WTC11 (cell line): ENCODE measurements at regions of chr3 and their contacts with region 1.

Region 1: DNA sequence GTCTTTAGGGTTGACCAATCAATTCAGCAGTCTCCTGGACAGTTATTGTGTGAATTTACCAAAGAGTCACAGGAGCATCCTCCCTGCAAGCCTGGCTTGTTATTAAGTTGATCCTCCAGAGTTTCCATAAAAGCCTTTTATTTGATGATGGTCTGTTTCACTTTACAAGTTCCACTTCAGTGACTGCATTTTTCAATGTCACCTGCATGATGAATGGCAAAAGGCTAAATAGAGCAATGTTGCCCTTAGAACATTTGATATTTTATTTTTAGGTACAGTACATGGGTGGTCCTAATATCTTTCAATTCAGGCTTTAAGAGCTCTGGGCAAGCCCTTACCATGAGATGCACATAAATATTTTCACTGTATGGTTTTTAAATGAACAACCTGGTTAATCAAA is 22.6 kb downstream of the GUCA1C start:
- DNase-seq: no peak
- ATAC-seq: no peak
- H3K4me3 Mint-ChIP-seq: no peak overlapping the region
- H3K27ac Mint-ChIP-seq: no peak overlapping the region
- H3K4me1 Mint-ChIP-seq: peaks cover 8% of the 10 kb centered on the region
- H3K27me3 Mint-ChIP-seq: no peaks in the 10 kb centered on the region
- CTCF ChIP-seq: no peak

Region 2: DNA sequence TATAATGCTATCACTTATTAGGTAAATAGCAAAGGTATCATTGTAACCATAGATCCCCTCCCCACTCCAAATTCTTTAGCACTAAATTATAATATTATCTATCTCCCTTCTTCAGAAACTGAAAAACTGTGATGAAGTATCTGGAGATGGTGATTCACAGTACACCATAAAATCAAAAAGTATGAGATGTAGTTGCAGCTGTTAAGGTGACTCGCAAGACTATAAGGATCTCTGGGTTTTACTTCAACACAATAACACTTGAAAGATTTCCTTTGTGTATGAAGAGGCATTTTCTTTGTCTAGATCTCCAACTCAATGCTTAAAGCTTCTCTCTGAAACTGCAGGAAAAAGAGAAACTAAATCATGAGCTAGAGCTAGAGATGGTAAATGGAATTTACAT is 755.7 kb before region 1 on chr3:
- CTCF ChIA-PET with region 1: no interaction called
- POLR2A ChIA-PET with region 1: interaction called, 13 read pairs
- DNase-seq: no peak
- ATAC-seq: no peak
- H3K4me3 Mint-ChIP-seq: no peak overlapping the region
- H3K27ac Mint-ChIP-seq: no peak overlapping the region
- H3K4me1 Mint-ChIP-seq: peaks cover 16% of the 10 kb centered on the region
- H3K27me3 Mint-ChIP-seq: no peaks in the 10 kb centered on the region
- CTCF ChIP-seq: no peak

Region 3: DNA sequence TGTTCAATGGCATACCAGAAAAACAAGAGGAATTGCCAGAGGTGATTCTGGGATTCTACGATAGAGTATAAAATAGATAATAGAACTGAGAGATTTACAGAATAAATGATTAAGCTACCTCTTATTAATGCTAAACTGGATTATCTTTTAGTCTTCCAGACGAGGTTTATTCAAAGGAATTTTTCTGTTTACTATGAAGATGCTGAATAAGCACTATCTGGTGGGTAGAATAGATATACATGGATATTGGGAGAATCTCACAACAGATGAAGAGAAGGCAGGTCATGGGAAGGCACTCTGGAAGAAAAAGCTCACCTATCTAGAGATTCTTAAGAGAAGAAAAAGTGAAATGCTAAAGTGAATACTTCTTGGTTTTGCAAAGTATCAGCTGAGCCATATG is 353.0 kb before region 1 on chr3:
- CTCF ChIA-PET with region 1: no interaction called
- POLR2A ChIA-PET with region 1: no interaction called
- DNase-seq: no peak
- ATAC-seq: no peak
- H3K4me3 Mint-ChIP-seq: no peak overlapping the region
- H3K27ac Mint-ChIP-seq: peak overlapping the region; percentile 50; the same call in 1 of the 2 replicates
- H3K4me1 Mint-ChIP-seq: peaks cover 31% of the 10 kb centered on the region
- H3K27me3 Mint-ChIP-seq: no peaks in the 10 kb centered on the region
- CTCF ChIP-seq: no peak

Region 4: GRCh38 chr3:108862865-108863798 is 67.9 kb before region 1 on chr3:
- CTCF ChIA-PET with region 1: no interaction called
- POLR2A ChIA-PET with region 1: no interaction called
- DNase-seq: no peak
- ATAC-seq: peak; percentile 48
- H3K4me3 Mint-ChIP-seq: no peak overlapping the region
- H3K27ac Mint-ChIP-seq: no peak overlapping the region; the same call in 1 of the 2 replicates
- H3K4me1 Mint-ChIP-seq: peaks cover 47% of the 10 kb centered on the region
- H3K27me3 Mint-ChIP-seq: no peaks in the 10 kb centered on the region
- CTCF ChIP-seq: no peak